Common myeloid progenitor, CD34-positive (primary cell): ENCODE measurements at regions of chr2 and their contacts with region 1.

Region 1: DNA sequence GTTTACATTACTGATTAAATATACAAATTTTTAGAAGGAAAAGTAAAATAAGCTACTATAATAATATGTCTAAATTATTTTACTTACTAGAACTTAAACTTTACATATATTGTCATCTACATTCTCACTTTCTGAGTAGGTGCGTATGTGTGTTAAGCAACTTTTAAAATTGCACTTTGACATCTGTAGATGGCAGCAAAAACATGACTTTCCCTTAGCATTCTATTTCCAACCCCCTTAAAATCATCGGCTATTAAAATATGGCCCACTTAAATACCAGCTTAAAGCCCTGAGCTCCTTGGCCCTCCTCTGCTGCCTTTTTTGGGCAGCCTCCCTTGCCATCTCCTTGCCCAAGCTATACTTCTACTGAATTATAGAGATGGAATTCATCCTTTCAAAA is 78.0 kb downstream of the UPP2 start:
- DNase-seq: peak; percentile 54 to 75 (median 73)
- H3K4me3 ChIP-seq: no peak overlapping the region
- H3K27ac ChIP-seq: no peak overlapping the region
- H3K4me1 ChIP-seq: peaks cover 3 to 16% (median 4%) of the 10 kb centered on the region in 4 experiments
- H3K27me3 ChIP-seq: no peaks in the 10 kb centered on the region

Region 2: GRCh38 chr2:157959249-157959648 is 220.4 kb before region 1 on chr2:
- CTCF ChIA-PET with region 1: no interaction called
- POLR2A ChIA-PET with region 1: no interaction called
- DNase-seq: no peak
- H3K4me3 ChIP-seq: no peak overlapping the region
- H3K27ac ChIP-seq: no peak overlapping the region
- H3K4me1 ChIP-seq: no peaks in the 10 kb centered on the region
- H3K27me3 ChIP-seq: no peaks in the 10 kb centered on the region

Region 3: DNA sequence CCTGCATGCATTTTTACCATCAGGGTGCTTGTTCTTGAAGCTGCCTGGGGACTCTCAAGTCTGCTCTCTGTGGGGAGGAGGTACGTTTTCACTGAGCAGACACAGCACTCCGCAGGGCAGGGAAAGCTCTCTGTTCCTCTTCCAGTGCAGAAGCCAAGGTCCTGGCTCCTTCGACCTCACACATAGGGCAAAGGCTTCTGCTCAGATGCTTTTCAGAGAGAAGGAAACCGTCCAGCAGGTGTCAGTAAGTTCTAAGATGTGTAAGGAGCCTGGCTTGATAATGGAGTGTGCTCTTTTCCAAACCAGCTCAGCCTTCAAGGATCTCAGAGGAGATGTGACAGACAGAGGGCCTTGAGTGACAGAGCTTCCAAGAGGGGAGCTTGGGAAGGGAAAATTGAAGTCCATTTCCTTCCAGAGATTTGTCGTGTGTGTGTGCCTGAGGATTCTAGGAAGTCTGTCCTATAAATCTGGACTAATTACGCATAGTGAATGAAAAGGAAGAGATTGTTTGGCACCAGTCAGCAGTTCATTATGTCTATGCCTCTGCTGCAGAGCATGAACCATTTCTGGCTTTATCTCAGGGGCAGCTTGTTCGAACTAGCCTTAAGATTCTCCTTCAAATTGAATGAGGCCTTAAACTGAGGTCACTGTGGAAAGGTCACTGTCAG is 145.3 kb before region 1 on chr2:
- CTCF ChIA-PET with region 1: interaction called, 11 read pairs
- POLR2A ChIA-PET with region 1: no interaction called
- DNase-seq: peak; percentile 63 to 87 (median 78)
- H3K4me3 ChIP-seq: no peak overlapping the region
- H3K27ac ChIP-seq: no peak overlapping the region
- H3K4me1 ChIP-seq: no peaks in the 10 kb centered on the region
- H3K27me3 ChIP-seq: no peaks in the 10 kb centered on the region

Region 4: DNA sequence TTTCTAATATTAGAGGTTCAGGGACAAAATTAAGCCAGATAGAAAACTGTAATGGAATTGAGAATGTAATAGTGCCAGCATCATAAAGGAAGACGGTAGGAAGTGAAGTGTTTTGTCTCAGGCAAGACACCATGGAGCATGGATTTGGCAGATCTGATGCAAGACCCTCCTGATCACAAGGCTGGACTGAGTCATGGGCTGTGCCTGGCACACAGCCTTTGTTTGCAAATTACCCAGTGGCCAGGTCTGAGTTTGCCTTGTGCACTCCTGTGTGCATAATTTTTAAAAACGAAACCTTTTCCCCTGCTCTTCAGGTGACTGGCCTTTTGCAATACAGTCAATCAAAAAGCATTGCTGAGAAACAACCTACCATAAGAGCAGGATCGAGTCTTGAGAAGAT is 79.9 kb before region 1 on chr2:
- CTCF ChIA-PET with region 1: no interaction called
- POLR2A ChIA-PET with region 1: no interaction called
- DNase-seq: no peak
- H3K4me3 ChIP-seq: no peak overlapping the region
- H3K27ac ChIP-seq: no peak overlapping the region
- H3K4me1 ChIP-seq: no peaks in the 10 kb centered on the region
- H3K27me3 ChIP-seq: no peaks in the 10 kb centered on the region

Region 5: DNA sequence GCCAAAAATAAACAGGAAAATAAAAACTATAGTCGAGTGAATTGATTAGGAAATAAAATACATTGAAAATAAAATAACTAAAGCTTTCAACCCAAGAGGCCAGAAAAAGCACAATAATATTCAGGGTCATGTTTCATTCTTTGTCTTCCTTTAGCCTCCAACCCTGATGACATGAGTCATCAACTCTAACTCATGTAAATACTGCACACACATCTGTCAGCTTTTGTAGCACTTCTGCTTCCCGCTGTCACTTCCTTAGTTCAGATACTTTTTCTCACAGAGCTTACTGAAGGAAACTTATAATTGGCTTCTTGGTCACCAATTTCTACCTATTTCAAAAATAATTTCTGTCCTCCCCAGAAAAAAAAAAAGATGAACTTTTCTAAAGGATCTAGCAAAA is 34.8 kb after region 1 on chr2:
- CTCF ChIA-PET with region 1: interaction called, 17 read pairs
- POLR2A ChIA-PET with region 1: no interaction called
- DNase-seq: peak; percentile 91 to 99 (median 97)
- H3K4me3 ChIP-seq: peak overlapping the region in 2 of 7 experiments; percentile 20 to 28
- H3K27ac ChIP-seq: peak overlapping the region; percentile 92 to 93
- H3K4me1 ChIP-seq: peaks cover 23 to 44% (median 35%) of the 10 kb centered on the region in 4 experiments
- H3K27me3 ChIP-seq: no peaks in the 10 kb centered on the region

Region 6: GRCh38 chr2:158745044-158745865 is 565.6 kb after region 1 on chr2:
- CTCF ChIA-PET with region 1: interaction called, 33 read pairs
- POLR2A ChIA-PET with region 1: no interaction called
- DNase-seq: peak; percentile 67 to 85 (median 82)
- H3K4me3 ChIP-seq: no peak overlapping the region
- H3K27ac ChIP-seq: no peak overlapping the region
- H3K4me1 ChIP-seq: no peaks in the 10 kb centered on the region
- H3K27me3 ChIP-seq: peaks cover 0 to 9% (median 4%) of the 10 kb centered on the region in 5 experiments